GM12878 (cell line): ENCODE measurements at regions of chr2 and their contacts with region 1.

Region 1: DNA sequence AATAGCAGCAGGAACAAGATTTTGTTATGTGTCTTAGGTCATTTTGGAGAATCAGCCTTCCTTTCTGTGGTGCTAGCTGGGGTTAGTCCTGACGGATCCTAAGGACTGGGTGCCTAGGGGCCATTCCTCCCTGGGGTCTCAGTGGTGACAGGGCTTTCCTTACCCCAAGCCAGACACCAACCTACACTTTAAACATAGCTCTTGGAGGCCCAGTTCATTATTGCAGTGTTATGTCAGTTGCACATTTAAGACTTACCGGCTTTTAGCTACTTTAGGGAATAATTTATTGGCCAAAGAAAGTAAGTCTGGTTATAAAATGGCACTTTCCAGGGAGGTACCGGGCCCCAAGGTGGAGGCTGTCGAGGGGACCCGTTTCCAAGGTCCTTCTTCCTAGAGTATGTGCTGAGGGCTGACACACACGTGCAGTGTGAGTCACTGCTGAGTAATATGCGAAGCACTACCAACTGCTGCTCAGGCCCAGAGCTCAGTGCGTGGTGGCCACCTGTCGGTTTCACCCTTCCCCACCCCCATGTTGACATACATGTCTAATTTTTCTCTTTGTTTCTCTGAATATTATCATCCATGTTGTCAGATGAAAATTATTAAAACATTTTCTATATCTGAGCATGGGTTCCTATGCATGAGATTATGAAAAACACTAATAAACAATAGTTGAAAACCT is 37.0 kb upstream of the GRHL1 start:
- DNase-seq: peak; percentile 45
- ATAC-seq: peak; percentile 100
- H3K4me3 ChIP-seq: no peak overlapping the region
- H3K27ac ChIP-seq: peak overlapping the region; percentile 27; the same call in 1 of the 2 replicates
- H3K4me1 ChIP-seq: peaks cover 9% of the 10 kb centered on the region
- H3K27me3 ChIP-seq: no peaks in the 10 kb centered on the region
- CTCF ChIP-seq: peak; percentile 44 to 78 (median 44); a peak in 5 of 6 replicates
- EP300 ChIP-seq: peak; percentile 39 to 53; a peak in 1 of 4 replicates
- POLR2A ChIP-seq: no peak
- RAD21 ChIP-seq: peak; percentile 67

Region 2: DNA sequence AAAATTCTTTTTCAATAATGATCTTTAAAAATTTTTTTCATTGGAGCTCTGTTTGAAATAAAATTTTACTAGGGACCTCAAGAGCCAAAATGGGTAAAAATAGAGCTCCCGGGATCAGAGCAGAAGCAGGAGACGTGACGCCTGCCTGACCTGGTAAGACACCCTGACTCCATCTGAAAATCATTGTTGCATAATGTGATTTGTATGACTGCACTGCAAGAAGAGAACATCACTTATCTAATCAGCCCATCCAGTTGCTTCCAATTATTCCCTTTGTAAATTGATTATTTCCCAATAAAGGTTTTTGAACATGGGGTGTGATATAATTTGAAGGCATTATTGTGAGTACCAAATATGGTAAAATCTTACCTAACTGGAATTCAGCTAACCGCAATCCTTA is 88.3 kb before region 1 on chr2:
- CTCF ChIA-PET with region 1: no interaction called
- POLR2A ChIA-PET with region 1: no interaction called
- RAD21 ChIA-PET with region 1: no interaction called
- SMC1A ChIA-PET with region 1: no interaction called
- in situ Hi-C with region 1: no loop called
- intact Hi-C with region 1: no loop called
- DNase-seq: no peak
- ATAC-seq: no peak
- H3K4me3 ChIP-seq: no peak overlapping the region
- H3K27ac ChIP-seq: no peak overlapping the region
- H3K4me1 ChIP-seq: no peaks in the 10 kb centered on the region
- H3K27me3 ChIP-seq: no peaks in the 10 kb centered on the region; a peak in 1 of 4 replicates
- CTCF ChIP-seq: no peak
- EP300 ChIP-seq: no peak
- POLR2A ChIP-seq: no peak
- RAD21 ChIP-seq: no peak

Region 3: GRCh38 chr2:9843229-9844035 is 71.1 kb before region 1 on chr2 and contains the start of gene TAF1B:
- CTCF ChIA-PET with region 1: interaction called, 5 read pairs
- POLR2A ChIA-PET with region 1: interaction called, 5 read pairs
- RAD21 ChIA-PET with region 1: interaction called, 8 read pairs
- SMC1A ChIA-PET with region 1: interaction called, 14 read pairs
- in situ Hi-C with region 1: no loop called
- intact Hi-C with region 1: no loop called
- DNase-seq: peak; percentile 72
- ATAC-seq: peak; percentile 93
- H3K4me3 ChIP-seq: peak within 1 kb of the TSS; percentile 70
- H3K27ac ChIP-seq: peak within 1 kb of the TSS; percentile 51
- H3K4me1 ChIP-seq: peaks cover 3% of the 10 kb centered on the region; the same call in 1 of the 2 replicates
- H3K27me3 ChIP-seq: no peaks in the 10 kb centered on the region
- CTCF ChIP-seq: peak; percentile 31 to 40 (median 37); a peak in 5 of 6 replicates
- EP300 ChIP-seq: no peak
- POLR2A ChIP-seq: peak; percentile 86
- RAD21 ChIP-seq: 0 out of 2 replicates have a peak, but pooled peaks have one; percentile 9
- polyA plus RNA-seq, gene TAF1B: 9.4 to 9.9 TPM

Region 4: DNA sequence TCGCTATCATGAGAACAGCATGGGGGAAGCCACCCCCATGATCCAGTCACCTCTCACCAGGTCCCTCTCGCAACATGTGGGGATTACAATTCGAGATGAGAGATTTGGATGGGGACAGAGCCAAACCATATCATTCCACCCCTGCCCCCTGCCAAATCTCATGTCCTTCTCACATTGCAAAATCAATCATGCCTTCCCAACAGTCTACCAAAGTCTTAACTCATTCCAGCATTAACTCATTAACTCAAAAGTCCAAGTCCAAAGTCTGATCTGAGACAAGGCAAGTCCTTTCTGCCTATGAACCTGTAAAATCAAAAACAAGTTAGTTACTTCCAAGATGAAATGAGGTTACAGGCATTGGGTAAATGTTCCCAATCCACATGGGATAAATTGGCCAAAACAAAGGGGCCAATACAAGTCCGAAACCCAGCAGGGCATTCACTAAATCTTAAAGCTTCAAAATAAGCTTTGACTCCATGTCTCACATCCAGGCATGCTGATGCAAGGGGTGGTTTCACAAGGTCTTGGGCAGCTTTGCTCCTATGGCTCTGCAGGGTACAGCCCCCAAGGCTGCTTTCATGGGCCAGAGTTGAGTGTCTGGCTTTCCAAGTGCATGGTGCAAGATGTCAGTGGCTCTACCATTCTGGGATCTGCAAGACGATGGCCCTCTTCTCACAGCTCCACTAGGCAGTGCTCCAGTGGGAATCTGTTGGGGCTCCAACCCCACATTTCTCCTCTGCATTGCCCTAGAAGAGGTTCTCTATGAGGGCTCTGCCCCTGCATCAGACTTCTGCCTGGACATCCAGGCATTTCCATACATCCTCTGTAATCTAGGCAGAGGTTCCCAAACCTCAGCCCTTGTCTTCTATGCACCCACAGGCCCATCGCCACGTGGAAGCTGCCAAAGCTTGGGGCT is 56.5 kb before region 1 on chr2:
- CTCF ChIA-PET with region 1: no interaction called
- POLR2A ChIA-PET with region 1: no interaction called
- RAD21 ChIA-PET with region 1: no interaction called
- SMC1A ChIA-PET with region 1: no interaction called
- in situ Hi-C with region 1: no loop called
- intact Hi-C with region 1: no loop called
- DNase-seq: no peak
- ATAC-seq: no peak
- H3K4me3 ChIP-seq: no peak overlapping the region
- H3K27ac ChIP-seq: no peak overlapping the region
- H3K4me1 ChIP-seq: no peaks in the 10 kb centered on the region
- H3K27me3 ChIP-seq: no peaks in the 10 kb centered on the region
- CTCF ChIP-seq: no peak
- EP300 ChIP-seq: no peak
- POLR2A ChIP-seq: no peak
- RAD21 ChIP-seq: no peak